H1 (cell line): ENCODE measurements at regions of chr16 and their contacts with region 1.

Region 1: DNA sequence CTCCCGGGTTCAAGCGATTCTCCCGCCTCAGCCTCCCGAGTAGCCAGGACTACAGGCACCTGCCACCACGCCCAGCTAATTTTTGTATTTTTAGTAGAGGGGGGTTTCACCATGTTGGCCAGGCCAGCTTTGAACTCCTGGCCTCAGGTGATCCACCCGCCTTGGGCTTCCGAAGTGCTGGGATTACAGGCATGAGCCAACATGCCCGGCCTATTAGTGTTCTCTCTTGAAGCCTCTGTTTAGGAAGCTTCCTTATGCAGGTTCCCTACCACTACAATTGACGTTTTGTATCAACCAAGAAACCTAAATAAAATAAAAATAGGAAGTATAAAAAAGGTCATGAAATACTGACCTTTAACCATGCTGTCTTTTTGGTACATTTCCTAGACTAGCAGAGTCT is 16.0 kb downstream of the CHST5 start:
- DNase-seq: no peak
- H3K4me3 ChIP-seq: no peak overlapping the region
- H3K27ac ChIP-seq: no peak overlapping the region
- H3K4me1 ChIP-seq: peaks cover 0 to 6% (median 2%) of the 10 kb centered on the region in 4 experiments; a peak in 3 of 7 replicates
- H3K27me3 ChIP-seq: no peaks in the 10 kb centered on the region
- CTCF ChIP-seq: no peak
- EP300 ChIP-seq: no peak
- POLR2A ChIP-seq: no peak
- RAD21 ChIP-seq: no peak

Region 2: GRCh38 chr16:75385507-75386152 is 134.3 kb before region 1 on chr16:
- CTCF ChIA-PET with region 1: no interaction called
- POLR2A ChIA-PET with region 1: no interaction called
- DNase-seq: no peak
- H3K4me3 ChIP-seq: no peak overlapping the region
- H3K27ac ChIP-seq: no peak overlapping the region
- H3K4me1 ChIP-seq: no peaks in the 10 kb centered on the region
- H3K27me3 ChIP-seq: no peaks in the 10 kb centered on the region
- CTCF ChIP-seq: peak in 2 of 3 experiments; percentile 32 to 47; a peak in 2 of 4 replicates
- EP300 ChIP-seq: no peak
- POLR2A ChIP-seq: no peak
- RAD21 ChIP-seq: peak; percentile 64 to 67

Region 3: GRCh38 chr16:75443298-75443697 is 76.6 kb before region 1 on chr16:
- CTCF ChIA-PET with region 1: interaction called, 14 read pairs
- POLR2A ChIA-PET with region 1: interaction called, 4 read pairs
- DNase-seq: no peak
- H3K4me3 ChIP-seq: no peak overlapping the region
- H3K27ac ChIP-seq: no peak overlapping the region
- H3K4me1 ChIP-seq: no peaks in the 10 kb centered on the region
- H3K27me3 ChIP-seq: no peaks in the 10 kb centered on the region
- CTCF ChIP-seq: no peak
- EP300 ChIP-seq: no peak
- POLR2A ChIP-seq: no peak
- RAD21 ChIP-seq: no peak

Region 4: GRCh38 chr16:75478074-75478473 is 41.8 kb before region 1 on chr16:
- CTCF ChIA-PET with region 1: interaction called, 181 read pairs
- POLR2A ChIA-PET with region 1: interaction called, 3 read pairs
- DNase-seq: no peak
- H3K4me3 ChIP-seq: no peak overlapping the region
- H3K27ac ChIP-seq: no peak overlapping the region
- H3K4me1 ChIP-seq: no peaks in the 10 kb centered on the region
- H3K27me3 ChIP-seq: no peaks in the 10 kb centered on the region
- CTCF ChIP-seq: no peak
- EP300 ChIP-seq: no peak
- POLR2A ChIP-seq: no peak
- RAD21 ChIP-seq: no peak

Region 5: GRCh38 chr16:75495076-75495674 is 24.7 kb before region 1 on chr16 and contains the start of gene CHST6:
- CTCF ChIA-PET with region 1: interaction called, 56 read pairs
- POLR2A ChIA-PET with region 1: interaction called, 73 read pairs
- DNase-seq: peak in 1 of 2 experiments; percentile 91
- H3K4me3 ChIP-seq: peak within 1 kb of the TSS; percentile 66 to 87 (median 78)
- H3K27ac ChIP-seq: peak within 1 kb of the TSS; percentile 25; the same call in 1 of the 2 replicates
- H3K4me1 ChIP-seq: peaks cover 0 to 6% (median under 1%) of the 10 kb centered on the region in 4 experiments; a peak in 3 of 7 replicates
- H3K27me3 ChIP-seq: 0 out of 7 replicates have a peak, but pooled peaks cover 0 to 2% (median 0%) of the 10 kb centered on the region in 4 experiments
- CTCF ChIP-seq: no peak
- EP300 ChIP-seq: no peak
- POLR2A ChIP-seq: peak; percentile 87 to 91
- RAD21 ChIP-seq: no peak; a peak in 1 of 4 replicates
- total RNA-seq, gene CHST6: 25.4 and 26.4 TPM in 2 replicates

Region 6: DNA sequence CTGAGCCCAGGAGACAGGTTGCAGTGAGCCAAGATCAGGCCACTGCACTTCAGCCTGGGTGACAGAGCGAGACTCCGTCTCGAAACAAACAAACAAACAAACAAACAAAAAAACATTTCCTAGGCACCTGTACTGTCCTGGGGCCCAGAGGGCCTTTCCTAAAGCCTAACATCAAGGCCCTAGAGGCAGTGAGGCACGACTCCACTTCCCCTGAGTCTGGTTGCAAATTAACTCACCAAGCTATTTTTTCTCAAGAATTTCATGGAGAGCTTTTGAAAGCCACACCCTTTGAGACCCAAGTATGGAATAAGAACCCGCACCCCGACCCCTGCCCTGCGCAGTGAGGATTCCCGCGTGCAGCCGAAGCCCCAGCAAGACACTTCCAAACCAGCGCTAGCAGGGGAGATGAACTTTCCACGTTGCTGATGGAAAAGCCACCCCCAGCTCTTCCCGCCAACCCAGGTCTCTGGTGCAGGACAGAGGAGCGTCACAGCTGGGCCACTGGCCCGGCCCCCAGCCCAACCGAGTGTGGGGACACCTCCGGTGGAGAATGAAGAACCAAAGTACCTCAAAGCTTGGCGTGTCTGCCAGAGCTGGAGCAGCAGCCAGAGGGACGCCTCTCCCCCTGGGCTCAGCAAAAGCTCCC is 14.8 kb after region 1 on chr16:
- CTCF ChIA-PET with region 1: interaction called, 203 read pairs
- POLR2A ChIA-PET with region 1: interaction called, 17 read pairs
- DNase-seq: no peak
- H3K4me3 ChIP-seq: no peak overlapping the region
- H3K27ac ChIP-seq: no peak overlapping the region
- H3K4me1 ChIP-seq: peaks cover 0 to 6% (median 0%) of the 10 kb centered on the region in 4 experiments; a peak in 1 of 7 replicates
- H3K27me3 ChIP-seq: no peaks in the 10 kb centered on the region
- CTCF ChIP-seq: no peak
- EP300 ChIP-seq: no peak
- POLR2A ChIP-seq: no peak
- RAD21 ChIP-seq: no peak

Region 7: GRCh38 chr16:75555707-75556430 is 36.0 kb after region 1 on chr16 and contains the start of gene TMEM231:
- CTCF ChIA-PET with region 1: interaction called, 158 read pairs
- POLR2A ChIA-PET with region 1: interaction called, 18 read pairs
- DNase-seq: peak; percentile 67 to 96
- H3K4me3 ChIP-seq: peak within 1 kb of the TSS; percentile 57 to 96 (median 84)
- H3K27ac ChIP-seq: no peak within 1 kb of the TSS
- H3K4me1 ChIP-seq: peaks cover 0 to 3% (median 1%) of the 10 kb centered on the region in 4 experiments; a peak in 3 of 7 replicates
- H3K27me3 ChIP-seq: no peaks in the 10 kb centered on the region; a peak in 1 of 7 replicates
- CTCF ChIP-seq: no peak
- EP300 ChIP-seq: no peak
- POLR2A ChIP-seq: 0 out of 3 replicates have a peak, but pooled peaks of 1 of the 2 experiments have one; percentile 34
- RAD21 ChIP-seq: no peak
- total RNA-seq, gene TMEM231: 8.0 and 8.3 TPM in 2 replicates

Region 8: GRCh38 chr16:75622761-75623605 is 103.1 kb after region 1 on chr16 and contains the start of gene ADAT1:
- CTCF ChIA-PET with region 1: interaction called, 20 read pairs
- POLR2A ChIA-PET with region 1: interaction called, 5 read pairs
- DNase-seq: peak; percentile 91 to 96
- H3K4me3 ChIP-seq: peak within 1 kb of the TSS; percentile 80 to 96 (median 85)
- H3K27ac ChIP-seq: peak within 1 kb of the TSS; percentile 90
- H3K4me1 ChIP-seq: peaks cover 0 to 9% (median 4%) of the 10 kb centered on the region in 4 experiments; a peak in 5 of 7 replicates
- H3K27me3 ChIP-seq: no peaks in the 10 kb centered on the region
- CTCF ChIP-seq: no peak
- EP300 ChIP-seq: peak in 1 of 2 experiments; percentile 12; a peak in 1 of 3 replicates
- POLR2A ChIP-seq: peak; percentile 77 to 94
- RAD21 ChIP-seq: no peak
- total RNA-seq, gene ADAT1: 44.7 and 47.4 TPM in 2 replicates

Region 9: DNA sequence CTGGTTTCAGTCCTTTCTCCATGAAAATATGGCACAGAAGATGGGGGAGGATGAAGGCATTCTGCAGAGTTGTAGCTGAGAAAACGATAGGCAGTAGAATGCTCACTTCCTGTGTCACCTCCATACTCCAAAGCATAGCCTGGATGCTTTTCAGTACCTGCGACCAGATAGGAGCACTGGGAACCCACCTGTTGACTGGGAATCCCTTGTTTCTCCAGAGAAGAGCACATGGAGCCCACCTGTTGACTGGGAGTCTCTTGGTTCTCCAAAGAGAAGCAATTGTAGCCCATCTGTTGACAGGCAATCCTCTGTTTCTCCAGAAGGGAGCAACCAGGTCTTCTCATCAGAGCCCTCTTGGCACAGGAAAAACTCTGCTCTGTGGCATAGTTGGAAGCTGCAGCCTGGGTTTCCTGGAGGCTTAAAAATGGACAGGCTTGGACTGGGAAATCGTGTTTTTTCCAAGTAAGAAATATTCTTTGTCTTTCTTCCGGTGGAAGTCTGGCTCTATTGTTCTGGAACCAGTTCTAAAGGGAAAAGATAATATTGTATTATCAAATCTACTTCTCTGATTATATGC is 140.9 kb after region 1 on chr16:
- CTCF ChIA-PET with region 1: no interaction called
- POLR2A ChIA-PET with region 1: no interaction called
- DNase-seq: no peak
- H3K4me3 ChIP-seq: no peak overlapping the region
- H3K27ac ChIP-seq: no peak overlapping the region
- H3K4me1 ChIP-seq: no peaks in the 10 kb centered on the region
- H3K27me3 ChIP-seq: no peaks in the 10 kb centered on the region
- CTCF ChIP-seq: no peak
- EP300 ChIP-seq: no peak
- POLR2A ChIP-seq: no peak
- RAD21 ChIP-seq: no peak

Region 10: DNA sequence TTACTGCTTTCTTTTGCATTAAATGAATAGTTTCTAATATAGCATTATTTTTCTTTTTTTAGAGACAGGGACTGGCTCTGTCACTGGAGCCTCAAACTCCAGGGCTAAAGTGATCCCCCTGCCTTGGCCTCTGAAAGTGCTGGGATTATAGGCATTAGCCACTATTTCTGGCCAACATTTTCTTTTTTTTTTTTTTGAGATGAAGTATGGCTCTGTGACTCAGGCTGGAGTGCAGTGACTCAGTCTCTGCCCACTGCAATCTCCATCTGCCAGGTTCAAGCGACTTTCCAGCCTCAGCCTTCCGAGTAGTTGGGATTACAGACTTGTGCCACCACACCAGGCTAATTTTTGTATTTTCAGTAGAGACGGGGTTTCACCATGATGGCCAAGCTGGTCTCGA is 183.4 kb after region 1 on chr16:
- CTCF ChIA-PET with region 1: no interaction called
- POLR2A ChIA-PET with region 1: no interaction called
- DNase-seq: no peak
- H3K4me3 ChIP-seq: no peak overlapping the region
- H3K27ac ChIP-seq: no peak overlapping the region
- H3K4me1 ChIP-seq: no peaks in the 10 kb centered on the region; a peak in 1 of 7 replicates
- H3K27me3 ChIP-seq: no peaks in the 10 kb centered on the region
- CTCF ChIP-seq: no peak
- EP300 ChIP-seq: no peak
- POLR2A ChIP-seq: no peak
- RAD21 ChIP-seq: no peak